ENCODE measurements at regions of chr21 and their contacts with region 1.

Region 1: GRCh38 chr21:42878993-42879787 is at the start of gene WDR4:
- DNase-seq: peak; percentile 87 to 99 (median 92)

Region 2: GRCh38 chr21:42766739-42767560 is 112.2 kb before region 1 on chr21:
- intact Hi-C with region 1: no loop called
- DNase-seq: peak in 2 of 10 donors; percentile 32 to 74

Region 3: DNA sequence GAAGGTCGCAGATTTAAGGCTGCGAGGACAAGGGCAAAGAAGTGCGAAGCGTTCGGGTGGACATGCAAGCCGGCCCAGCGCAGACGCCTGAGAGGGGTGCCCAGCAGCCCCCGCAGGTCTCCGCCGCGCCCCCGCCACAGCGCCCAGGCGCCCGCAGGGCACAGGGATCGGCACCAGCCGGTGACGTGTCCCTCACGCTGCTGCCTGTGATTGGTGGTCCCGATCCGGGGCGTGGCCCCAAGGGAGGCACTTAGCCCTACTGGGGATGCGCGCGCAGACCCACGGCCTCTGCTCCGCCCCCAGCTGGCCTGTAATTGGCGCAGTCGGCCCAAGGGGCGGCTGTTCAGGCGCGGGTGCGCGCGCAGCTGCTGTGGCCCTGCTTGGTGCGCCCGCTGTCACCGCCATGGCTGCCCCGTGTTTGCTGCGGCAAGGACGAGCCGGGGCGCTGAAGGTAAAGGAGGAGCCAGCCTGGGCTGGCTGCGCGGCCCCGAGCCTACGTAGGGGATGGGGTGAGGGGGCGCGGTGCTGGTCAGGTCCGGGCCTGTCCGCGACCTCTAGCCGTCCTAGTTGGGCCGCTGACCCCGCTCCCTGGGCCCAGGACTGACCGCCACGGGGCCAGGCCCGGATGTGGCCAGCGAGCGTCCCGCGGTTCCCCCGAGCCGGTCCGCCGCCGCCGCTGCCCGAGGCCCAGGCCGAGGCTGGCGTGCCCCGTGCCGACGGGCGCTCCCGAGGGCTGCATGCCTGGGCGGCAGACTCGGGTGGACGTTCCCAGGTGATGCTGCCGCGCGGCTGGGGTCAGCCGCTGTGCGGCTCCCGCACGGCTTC is 14.0 kb after region 1 on chr21 and contains the start of gene NDUFV3:
- intact Hi-C with region 1: loop called (anchors 1 kb)
- DNase-seq: peak; percentile 100

Region 4: DNA sequence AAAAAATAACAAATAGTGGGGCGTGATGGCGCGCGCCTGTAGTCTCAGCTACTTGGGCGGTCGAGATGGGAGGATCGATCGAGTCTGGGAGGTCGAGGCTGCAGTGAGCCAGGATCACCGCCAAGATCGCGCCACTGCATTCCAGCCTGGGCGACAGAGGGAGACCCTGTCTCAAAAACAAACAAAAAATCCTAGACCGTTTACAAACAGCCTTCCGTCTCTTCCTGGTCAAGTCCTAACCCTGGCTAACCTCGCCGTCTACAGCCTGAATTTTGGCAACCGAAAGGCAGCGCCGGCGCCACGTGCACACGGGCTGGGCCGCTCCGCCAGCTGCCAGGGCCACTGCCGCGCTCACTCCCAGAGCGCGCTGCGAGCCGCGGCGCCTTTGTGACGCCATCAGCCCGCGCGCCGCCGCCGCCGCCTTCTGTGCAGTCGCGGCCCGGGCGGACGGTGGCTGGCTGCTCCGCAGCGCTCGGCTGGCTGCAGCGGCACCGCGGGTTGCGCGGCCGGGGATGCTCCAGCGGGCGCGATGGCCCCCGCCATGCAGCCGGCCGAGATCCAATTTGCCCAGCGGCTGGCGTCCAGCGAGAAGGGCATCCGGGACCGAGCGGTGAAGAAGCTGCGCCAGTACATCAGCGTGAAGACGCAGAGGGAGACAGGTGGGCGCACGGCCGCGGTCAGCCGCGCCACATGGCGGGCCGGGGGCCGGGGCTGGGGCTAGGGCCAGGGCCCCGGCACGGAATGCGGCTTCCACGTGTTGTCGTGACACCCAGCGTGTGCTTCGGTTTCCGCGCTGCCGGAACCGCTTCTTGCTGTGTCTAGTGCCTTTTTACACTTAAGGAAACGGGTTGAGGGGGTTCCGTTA is 780.2 kb after region 1 on chr21 and contains the starts of genes HSF2BP and RRP1B:
- intact Hi-C with region 1: loop called (anchors 10 kb)
- DNase-seq: peak; percentile 64 to 97 (median 78)

Measured in posterior cingulate gyrus (tissue), 11 donors.